Heart left ventricle (tissue), 16 donors: ENCODE measurements at regions of chr9 and their contacts with region 1.

Region 1: GRCh38 chr9:79883073-79883645 is 311.4 kb downstream of the TLE4 start:
- DNase-seq: peak in 1 of 5 donors; percentile 67
- ATAC-seq: peak in 2 of 4 donors; percentile 44
- H3K4me3 ChIP-seq: no peak overlapping the region
- H3K27ac ChIP-seq: no peak overlapping the region
- H3K4me1 ChIP-seq: peaks cover 0 to 19% (median 0%) of the 10 kb centered on the region in 12 donors
- H3K27me3 ChIP-seq: no peaks in the 10 kb centered on the region
- CTCF ChIP-seq: no peak
- POLR2A ChIP-seq: no peak

Region 2: GRCh38 chr9:79651251-79651795 is 231.8 kb before region 1 on chr9:
- intact Hi-C with region 1: no loop called
- DNase-seq: peak in 2 of 5 donors; percentile 36 to 58
- ATAC-seq: peak in 1 of 4 donors; percentile 15
- H3K4me3 ChIP-seq: no peak overlapping the region
- H3K27ac ChIP-seq: no peak overlapping the region
- H3K4me1 ChIP-seq: no peaks in the 10 kb centered on the region
- H3K27me3 ChIP-seq: no peaks in the 10 kb centered on the region
- CTCF ChIP-seq: no peak
- POLR2A ChIP-seq: no peak

Region 3: GRCh38 chr9:79829566-79830302 is 53.4 kb before region 1 on chr9:
- intact Hi-C with region 1: loop called in 1 of 10 experiments (anchors 5 kb)
- DNase-seq: no peak
- ATAC-seq: no peak
- H3K4me3 ChIP-seq: no peak overlapping the region
- H3K27ac ChIP-seq: no peak overlapping the region
- H3K4me1 ChIP-seq: no peaks in the 10 kb centered on the region
- H3K27me3 ChIP-seq: no peaks in the 10 kb centered on the region
- CTCF ChIP-seq: no peak
- POLR2A ChIP-seq: no peak